ENCODE measurements at regions of chr20 and their contacts with region 1.

Region 1: DNA sequence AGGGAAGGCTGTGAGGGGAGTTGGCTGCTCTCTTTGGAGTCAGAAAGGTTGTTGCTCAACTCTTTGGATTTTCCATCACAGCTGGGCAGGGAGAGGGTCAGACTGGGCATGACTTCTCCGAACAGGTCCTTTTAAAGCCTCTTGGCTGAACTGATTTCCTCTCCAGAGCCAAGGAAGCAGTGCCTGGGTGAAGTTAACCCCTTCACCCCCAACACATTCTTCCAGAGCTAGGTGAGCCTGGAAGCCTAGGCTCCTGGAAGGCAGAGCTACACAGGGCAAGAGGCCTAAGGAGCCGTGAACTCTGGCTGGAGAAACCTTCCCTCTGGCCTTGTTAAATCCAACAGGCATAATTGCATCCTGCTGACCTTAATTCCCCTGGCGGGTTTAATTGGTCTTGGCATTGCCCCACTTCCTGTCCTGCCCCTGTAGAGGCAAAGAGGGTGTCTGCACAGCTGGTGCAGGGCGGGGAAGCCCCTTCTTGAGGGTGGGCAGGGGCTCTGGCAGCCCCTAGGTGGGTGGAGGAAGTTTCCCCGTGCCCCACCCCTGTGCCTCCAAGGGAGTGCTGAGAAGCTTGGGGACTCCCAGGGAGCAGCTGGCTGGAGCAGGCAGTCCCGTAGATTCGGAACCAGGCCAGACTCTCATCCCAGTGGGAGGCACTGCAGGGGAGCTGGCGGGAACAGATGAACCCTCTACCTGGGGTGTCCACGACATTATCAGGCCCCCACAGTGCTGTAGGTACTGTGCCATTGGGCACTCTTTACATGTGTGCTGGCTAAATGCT is 3.6 kb upstream of the MYLK2 start:
- DNase-seq: no peak
- ATAC-seq: no peak
- H3K4me3 ChIP-seq: no peak overlapping the region
- H3K4me3 Mint-ChIP-seq: no peak overlapping the region
- H3K27ac ChIP-seq: no peak overlapping the region
- H3K27ac Mint-ChIP-seq: no peak overlapping the region
- H3K4me1 ChIP-seq: no peaks in the 10 kb centered on the region
- H3K4me1 Mint-ChIP-seq: no peaks in the 10 kb centered on the region
- H3K27me3 ChIP-seq: no peaks in the 10 kb centered on the region
- H3K27me3 Mint-ChIP-seq: no peaks in the 10 kb centered on the region
- CTCF ChIP-seq: no peak

Region 2: GRCh38 chr20:32031007-32031958 is 215.7 kb after region 1 on chr20:
- CTCF ChIA-PET with region 1: interaction called, 23 read pairs
- POLR2A ChIA-PET with region 1: no interaction called
- intact Hi-C with region 1: no loop called
- DNase-seq: peak; percentile 22 to 73 (median 59)
- ATAC-seq: peak; percentile 75
- H3K4me3 ChIP-seq: peak overlapping the region; percentile 28 to 32
- H3K4me3 Mint-ChIP-seq: peak overlapping the region; percentile 39
- H3K27ac ChIP-seq: no peak overlapping the region
- H3K27ac Mint-ChIP-seq: no peak overlapping the region
- H3K4me1 ChIP-seq: peaks cover 4% of the 10 kb centered on the region
- H3K4me1 Mint-ChIP-seq: peaks cover 2% of the 10 kb centered on the region
- H3K27me3 ChIP-seq: peaks cover 4 to 7% of the 10 kb centered on the region in 2 experiments
- H3K27me3 Mint-ChIP-seq: peaks cover 31% of the 10 kb centered on the region
- CTCF ChIP-seq: peak; percentile 100